AG04449 (cell line): ENCODE measurements at regions of chr12 and their contacts with region 1.

Region 1: GRCh38 chr12:116226026-116226425 is 51.5 kb downstream of the MED13L start:
- DNase-seq: no peak
- H3K4me3 ChIP-seq: no peak overlapping the region
- CTCF ChIP-seq: no peak

Region 2: GRCh38 chr12:116236148-116236731 is 10.2 kb after region 1 on chr12:
- CTCF ChIA-PET with region 1: interaction called, 23 read pairs
- POLR2A ChIA-PET with region 1: no interaction called
- DNase-seq: no peak
- H3K4me3 ChIP-seq: no peak overlapping the region
- CTCF ChIP-seq: peak; percentile 33

Region 3: DNA sequence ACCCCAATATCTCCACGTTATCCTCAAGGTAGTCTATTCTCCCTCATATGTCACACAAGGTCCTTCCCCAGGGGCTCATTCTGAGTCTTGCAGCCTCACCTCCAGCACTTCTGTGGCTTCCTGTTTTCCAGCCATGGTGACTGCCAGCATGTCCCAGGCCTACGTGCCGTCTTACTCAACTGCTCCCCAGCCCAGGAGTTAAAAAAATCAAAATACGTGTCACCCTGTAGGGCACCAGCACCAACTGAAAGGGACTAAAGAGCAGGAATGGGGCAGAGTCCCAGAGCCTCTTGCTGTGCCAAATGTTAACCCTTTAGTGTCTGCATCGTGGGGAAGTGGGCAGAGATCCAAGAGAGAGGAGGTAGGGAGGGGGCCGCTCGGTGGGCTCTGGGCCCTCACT is 88.5 kb after region 1 on chr12:
- CTCF ChIA-PET with region 1: no interaction called
- POLR2A ChIA-PET with region 1: no interaction called
- DNase-seq: no peak
- H3K4me3 ChIP-seq: no peak overlapping the region
- CTCF ChIP-seq: no peak